ENCODE measurements at regions of chr9 and their contacts with region 1.

Region 1: DNA sequence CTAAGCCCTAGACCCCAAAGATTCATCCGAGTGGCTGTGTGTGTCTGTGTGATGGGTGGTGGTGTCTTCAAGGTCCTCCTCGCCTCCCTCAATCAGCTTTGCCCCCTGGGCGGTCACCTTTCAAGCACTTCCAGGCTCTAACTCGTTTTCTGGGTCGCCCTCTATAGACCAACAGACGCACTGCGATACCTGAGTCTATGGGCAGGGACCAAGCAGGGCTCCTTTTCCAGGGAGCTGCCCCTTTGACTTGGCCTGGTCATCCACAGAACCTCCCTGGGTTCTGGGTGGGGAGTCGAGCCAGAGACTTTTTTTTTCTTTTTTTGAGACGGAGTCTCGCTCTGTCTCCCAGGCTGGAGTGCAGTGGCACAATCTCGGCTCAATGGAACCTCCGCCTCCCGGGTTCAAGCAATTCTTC is 1.1 kb downstream of the SLC27A4 start:
- H3K4me3 ChIP-seq: peak overlapping the region; percentile 81
- H3K27ac ChIP-seq: peak overlapping the region; percentile 51; the same call in 1 of the 2 replicates
- H3K4me1 ChIP-seq: no peaks in the 10 kb centered on the region
- CTCF ChIP-seq: peak; percentile 35; the same call in 1 of the 2 replicates

Region 2: GRCh38 chr9:128296337-128297220 is 44.9 kb before region 1 on chr9:
- CTCF ChIA-PET with region 1: interaction called, 11 read pairs
- POLR2A ChIA-PET with region 1: interaction called, 4 read pairs
- H3K4me3 ChIP-seq: no peak overlapping the region
- H3K27ac ChIP-seq: no peak overlapping the region
- H3K4me1 ChIP-seq: no peaks in the 10 kb centered on the region
- CTCF ChIP-seq: no peak

Region 3: DNA sequence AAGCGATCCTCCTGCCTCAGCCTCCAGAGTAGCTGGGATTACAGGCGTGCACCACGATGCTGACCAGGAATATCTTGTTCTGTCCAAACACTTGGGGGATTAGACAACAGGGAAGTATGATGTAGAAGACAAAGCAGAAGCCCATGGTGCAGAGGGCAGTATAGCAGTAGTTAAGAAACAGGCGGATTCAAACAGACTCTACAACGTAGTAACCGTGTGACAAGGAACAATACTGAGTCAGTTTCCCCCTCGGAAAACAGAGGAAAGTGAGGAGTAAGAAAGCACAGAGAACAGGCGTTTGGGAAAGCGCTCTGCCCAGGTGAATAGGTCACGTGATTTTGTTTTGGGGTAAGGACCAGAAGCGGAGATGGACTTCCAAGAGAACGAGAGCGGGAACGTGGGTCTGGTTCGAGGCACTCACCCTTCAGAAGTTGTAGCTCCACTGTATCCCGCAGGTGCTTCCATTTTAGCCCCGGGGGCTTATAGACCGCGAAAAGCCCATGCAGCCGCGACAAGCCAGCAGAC is 19.5 kb before region 1 on chr9:
- CTCF ChIA-PET with region 1: interaction called, 10 read pairs
- POLR2A ChIA-PET with region 1: interaction called, 6 read pairs
- H3K4me3 ChIP-seq: peak overlapping the region; percentile 87
- H3K27ac ChIP-seq: no peak overlapping the region
- H3K4me1 ChIP-seq: no peaks in the 10 kb centered on the region
- CTCF ChIP-seq: no peak

Region 4: GRCh38 chr9:128361986-128362646 is 20.7 kb after region 1 on chr9:
- CTCF ChIA-PET with region 1: interaction called, 14 read pairs
- POLR2A ChIA-PET with region 1: interaction called, 3 read pairs
- H3K4me3 ChIP-seq: no peak overlapping the region
- H3K27ac ChIP-seq: no peak overlapping the region
- H3K4me1 ChIP-seq: no peaks in the 10 kb centered on the region
- CTCF ChIP-seq: peak; percentile 88

Measured in HEK293 (cell line).